CD8-positive, alpha-beta T cell (primary cell): ENCODE measurements at regions of chr10 and their contacts with region 1.

Region 1: DNA sequence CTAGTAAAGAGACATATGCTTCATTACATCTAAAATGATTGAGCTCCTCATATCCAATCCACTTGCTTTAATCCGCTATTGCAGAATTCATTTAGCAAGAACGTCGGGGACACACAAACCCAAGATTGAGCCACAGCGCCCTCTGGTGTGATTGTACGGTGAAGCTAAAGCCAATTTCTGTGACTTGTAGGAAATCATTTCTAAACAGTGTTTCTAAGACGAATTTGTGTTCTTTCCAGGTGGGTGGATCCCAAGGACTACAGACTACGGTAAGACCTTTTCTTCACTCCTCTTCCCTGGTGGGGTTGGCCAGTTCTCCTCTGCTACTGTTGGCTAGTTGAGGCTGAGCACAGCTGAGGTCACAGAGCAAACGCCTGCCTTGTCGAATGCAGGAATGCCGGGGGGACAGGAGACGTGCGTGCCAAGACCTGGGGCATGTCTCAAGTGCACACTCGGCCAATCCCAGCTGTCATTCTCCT is 5.2 kb downstream of the DMBT1 start:
- DNase-seq: peak; percentile 44 to 85 (median 74)
- ATAC-seq: no peak
- H3K4me3 ChIP-seq: no peak overlapping the region
- H3K4me3 Mint-ChIP-seq: no peak overlapping the region
- H3K27ac ChIP-seq: no peak overlapping the region
- H3K27ac Mint-ChIP-seq: no peak overlapping the region
- H3K4me1 ChIP-seq: no peaks in the 10 kb centered on the region
- H3K4me1 Mint-ChIP-seq: peaks cover 12% of the 10 kb centered on the region
- H3K27me3 ChIP-seq: no peaks in the 10 kb centered on the region
- H3K27me3 Mint-ChIP-seq: peaks cover 27% of the 10 kb centered on the region
- CTCF ChIP-seq: peak; percentile 83

Region 2: GRCh38 chr10:122298598-122299301 is 267.0 kb before region 1 on chr10:
- CTCF ChIA-PET with region 1: interaction called, 107 read pairs
- POLR2A ChIA-PET with region 1: no interaction called
- intact Hi-C with region 1: loop called (anchors 1 kb)
- DNase-seq: peak; percentile 44 to 79 (median 67)
- ATAC-seq: peak; percentile 86
- H3K4me3 ChIP-seq: no peak overlapping the region
- H3K4me3 Mint-ChIP-seq: no peak overlapping the region
- H3K27ac ChIP-seq: no peak overlapping the region
- H3K27ac Mint-ChIP-seq: no peak overlapping the region
- H3K4me1 ChIP-seq: peaks cover 10% of the 10 kb centered on the region
- H3K4me1 Mint-ChIP-seq: peaks cover 10% of the 10 kb centered on the region
- H3K27me3 ChIP-seq: no peaks in the 10 kb centered on the region
- H3K27me3 Mint-ChIP-seq: peaks cover 2% of the 10 kb centered on the region
- CTCF ChIP-seq: peak; percentile 85

Region 3: GRCh38 chr10:122342293-122343134 is 223.3 kb before region 1 on chr10:
- CTCF ChIA-PET with region 1: interaction called, 59 read pairs
- POLR2A ChIA-PET with region 1: no interaction called
- intact Hi-C with region 1: loop called (anchors 1 to 2 kb)
- DNase-seq: peak; percentile 46 to 77 (median 66)
- ATAC-seq: peak; percentile 79
- H3K4me3 ChIP-seq: no peak overlapping the region
- H3K4me3 Mint-ChIP-seq: no peak overlapping the region
- H3K27ac ChIP-seq: no peak overlapping the region
- H3K27ac Mint-ChIP-seq: no peak overlapping the region
- H3K4me1 ChIP-seq: no peaks in the 10 kb centered on the region
- H3K4me1 Mint-ChIP-seq: peaks cover 3% of the 10 kb centered on the region
- H3K27me3 ChIP-seq: no peaks in the 10 kb centered on the region
- H3K27me3 Mint-ChIP-seq: no peaks in the 10 kb centered on the region
- CTCF ChIP-seq: peak; percentile 89

Region 4: GRCh38 chr10:122495406-122496340 is 70.1 kb before region 1 on chr10:
- CTCF ChIA-PET with region 1: interaction called, 69 read pairs
- POLR2A ChIA-PET with region 1: interaction called, 3 read pairs
- intact Hi-C with region 1: no loop called
- DNase-seq: peak in 5 of 9 experiments; percentile 17 to 58 (median 49)
- ATAC-seq: no peak
- H3K4me3 ChIP-seq: no peak overlapping the region
- H3K4me3 Mint-ChIP-seq: peak overlapping the region; percentile 40
- H3K27ac ChIP-seq: no peak overlapping the region
- H3K27ac Mint-ChIP-seq: no peak overlapping the region
- H3K4me1 ChIP-seq: peaks cover 17% of the 10 kb centered on the region
- H3K4me1 Mint-ChIP-seq: peaks cover 20% of the 10 kb centered on the region
- H3K27me3 ChIP-seq: no peaks in the 10 kb centered on the region
- H3K27me3 Mint-ChIP-seq: peaks cover 5% of the 10 kb centered on the region
- CTCF ChIP-seq: no peak

Region 5: DNA sequence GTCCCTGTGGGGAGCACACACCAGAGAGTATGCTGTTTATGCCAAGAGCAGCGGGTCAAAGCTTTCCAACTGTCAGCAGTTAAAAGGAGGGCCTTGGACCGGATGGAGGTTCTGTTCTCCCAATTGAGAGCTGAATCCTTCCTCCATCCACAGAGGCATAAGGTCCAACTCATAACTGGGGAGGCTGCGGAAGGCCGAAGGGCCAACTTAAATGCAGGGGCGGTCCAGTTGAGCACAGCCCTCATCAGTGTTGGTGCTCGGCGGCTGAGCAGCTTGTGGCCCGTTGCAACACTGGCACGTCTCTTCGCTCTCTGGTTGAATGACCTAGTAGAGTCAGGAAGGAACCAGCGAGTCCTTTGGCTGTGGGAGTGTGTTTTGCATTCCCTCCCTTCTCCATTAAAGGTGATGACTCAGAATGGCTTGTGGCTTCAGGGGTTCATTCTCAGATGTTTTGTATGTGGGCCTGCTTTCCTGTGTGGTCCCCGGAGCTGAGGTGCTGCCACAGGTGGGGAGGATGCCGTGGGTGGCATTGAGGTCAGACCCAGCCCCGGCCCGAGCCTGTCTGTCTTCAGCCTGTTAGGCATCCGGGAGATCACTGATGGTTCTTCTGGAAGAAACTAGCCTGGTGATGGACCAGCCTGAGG is 50.1 kb before region 1 on chr10:
- CTCF ChIA-PET with region 1: interaction called, 24 read pairs
- POLR2A ChIA-PET with region 1: interaction called, 3 read pairs
- intact Hi-C with region 1: loop called (anchors 1 to 2 kb)
- DNase-seq: peak; percentile 34 to 84 (median 74)
- ATAC-seq: peak; percentile 91
- H3K4me3 ChIP-seq: no peak overlapping the region
- H3K4me3 Mint-ChIP-seq: peak overlapping the region; percentile 19
- H3K27ac ChIP-seq: no peak overlapping the region
- H3K27ac Mint-ChIP-seq: peak overlapping the region; percentile 14
- H3K4me1 ChIP-seq: peaks cover 28% of the 10 kb centered on the region
- H3K4me1 Mint-ChIP-seq: peaks cover 36% of the 10 kb centered on the region
- H3K27me3 ChIP-seq: no peaks in the 10 kb centered on the region
- H3K27me3 Mint-ChIP-seq: peaks cover 1% of the 10 kb centered on the region
- CTCF ChIP-seq: no peak

Region 6: DNA sequence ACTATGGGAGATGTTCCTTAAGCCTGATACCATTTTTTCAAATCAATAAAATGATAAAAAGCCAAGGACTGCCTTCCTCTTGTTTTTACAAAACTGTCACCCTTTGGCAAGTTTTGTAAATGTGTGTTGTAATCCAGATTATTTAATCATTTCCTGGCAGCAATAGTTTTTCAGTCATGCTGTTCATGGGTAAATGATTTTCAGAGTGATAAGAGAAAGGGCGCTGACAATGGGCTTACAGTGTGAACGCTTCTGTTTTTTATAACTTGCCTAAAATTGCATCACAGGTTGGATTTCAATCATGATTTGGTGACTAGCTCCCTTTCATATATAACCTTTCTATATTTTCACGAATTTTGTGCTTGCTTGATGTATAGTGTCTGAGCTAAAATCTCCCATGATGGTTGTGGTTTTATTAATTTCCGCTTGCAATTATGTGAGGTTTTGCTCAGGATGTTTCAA is 24.2 kb before region 1 on chr10:
- CTCF ChIA-PET with region 1: interaction called, 13 read pairs
- POLR2A ChIA-PET with region 1: no interaction called
- intact Hi-C with region 1: no loop called
- DNase-seq: peak in 2 of 9 experiments; percentile 24 to 53
- ATAC-seq: peak; percentile 40
- H3K4me3 ChIP-seq: no peak overlapping the region
- H3K4me3 Mint-ChIP-seq: no peak overlapping the region
- H3K27ac ChIP-seq: peak overlapping the region in 1 of 2 experiments; percentile 49
- H3K27ac Mint-ChIP-seq: peak overlapping the region; percentile 37
- H3K4me1 ChIP-seq: peaks cover 16% of the 10 kb centered on the region
- H3K4me1 Mint-ChIP-seq: peaks cover 32% of the 10 kb centered on the region
- H3K27me3 ChIP-seq: no peaks in the 10 kb centered on the region
- H3K27me3 Mint-ChIP-seq: no peaks in the 10 kb centered on the region
- CTCF ChIP-seq: no peak

Region 7: GRCh38 chr10:123559066-123559822 is 993.5 kb after region 1 on chr10:
- CTCF ChIA-PET with region 1: interaction called, 4 read pairs
- POLR2A ChIA-PET with region 1: no interaction called
- intact Hi-C with region 1: loop called in 1 of 2 experiments (anchors 5 kb)
- DNase-seq: peak; percentile 48 to 82 (median 67)
- ATAC-seq: peak; percentile 68
- H3K4me3 ChIP-seq: no peak overlapping the region
- H3K4me3 Mint-ChIP-seq: no peak overlapping the region
- H3K27ac ChIP-seq: no peak overlapping the region
- H3K27ac Mint-ChIP-seq: no peak overlapping the region
- H3K4me1 ChIP-seq: no peaks in the 10 kb centered on the region
- H3K4me1 Mint-ChIP-seq: no peaks in the 10 kb centered on the region
- H3K27me3 ChIP-seq: no peaks in the 10 kb centered on the region
- H3K27me3 Mint-ChIP-seq: peaks cover 15% of the 10 kb centered on the region
- CTCF ChIP-seq: peak; percentile 95